Right cardiac atrium (tissue), 5 donors: ENCODE measurements at regions of chr22 and their contacts with region 1.

Region 1: DNA sequence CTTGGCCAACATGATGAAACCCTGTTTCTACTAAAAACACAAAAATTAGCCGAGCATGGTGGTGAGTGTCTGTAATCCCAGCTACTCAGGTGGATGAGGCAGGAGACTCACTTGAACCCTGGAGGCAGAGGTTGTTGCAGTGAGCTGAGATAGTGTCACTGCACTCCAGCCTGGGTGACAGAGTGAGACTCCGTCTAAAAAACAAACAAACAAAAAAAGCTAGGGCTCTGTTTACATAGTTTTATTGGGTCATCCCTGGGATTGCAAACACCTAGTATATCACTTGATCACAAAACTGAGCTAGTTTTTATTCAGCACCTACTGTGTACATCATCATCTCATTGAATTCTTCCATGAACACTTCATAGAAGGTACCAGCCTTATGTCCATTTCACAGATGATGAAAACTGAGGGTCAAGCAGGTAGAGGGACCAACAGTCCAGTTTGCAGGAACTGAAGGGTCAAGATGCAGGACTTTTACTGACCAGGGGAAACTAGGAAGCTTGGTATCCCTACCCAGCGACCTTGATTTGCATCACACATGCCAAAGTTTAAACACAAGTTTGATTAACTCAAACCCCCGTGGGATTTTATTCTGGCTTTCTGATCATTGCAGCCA is 9.2 kb upstream of the MRTFA start:
- DNase-seq: no peak
- ATAC-seq: no peak
- H3K4me3 ChIP-seq: no peak overlapping the region
- H3K27ac ChIP-seq: no peak overlapping the region
- H3K4me1 ChIP-seq: peaks cover 2% of the 10 kb centered on the region
- H3K27me3 ChIP-seq: no peaks in the 10 kb centered on the region

Region 2: GRCh38 chr22:40463017-40463631 is 182.6 kb before region 1 on chr22:
- intact Hi-C with region 1: no loop called
- DNase-seq: no peak
- ATAC-seq: peak; percentile 35 to 55
- H3K4me3 ChIP-seq: peak overlapping the region; percentile 36
- H3K27ac ChIP-seq: no peak overlapping the region
- H3K4me1 ChIP-seq: peaks cover 4% of the 10 kb centered on the region
- H3K27me3 ChIP-seq: no peaks in the 10 kb centered on the region

Region 3: GRCh38 chr22:40525249-40525884 is 120.3 kb before region 1 on chr22:
- intact Hi-C with region 1: loop called in 2 of 4 experiments (anchors 5 to 10 kb)
- DNase-seq: peak in 2 of 3 donors; percentile 69 to 83
- ATAC-seq: no peak
- H3K4me3 ChIP-seq: no peak overlapping the region
- H3K27ac ChIP-seq: no peak overlapping the region
- H3K4me1 ChIP-seq: no peaks in the 10 kb centered on the region
- H3K27me3 ChIP-seq: no peaks in the 10 kb centered on the region